ENCODE measurements at regions of chr5 and their contacts with region 1.

Region 1: DNA sequence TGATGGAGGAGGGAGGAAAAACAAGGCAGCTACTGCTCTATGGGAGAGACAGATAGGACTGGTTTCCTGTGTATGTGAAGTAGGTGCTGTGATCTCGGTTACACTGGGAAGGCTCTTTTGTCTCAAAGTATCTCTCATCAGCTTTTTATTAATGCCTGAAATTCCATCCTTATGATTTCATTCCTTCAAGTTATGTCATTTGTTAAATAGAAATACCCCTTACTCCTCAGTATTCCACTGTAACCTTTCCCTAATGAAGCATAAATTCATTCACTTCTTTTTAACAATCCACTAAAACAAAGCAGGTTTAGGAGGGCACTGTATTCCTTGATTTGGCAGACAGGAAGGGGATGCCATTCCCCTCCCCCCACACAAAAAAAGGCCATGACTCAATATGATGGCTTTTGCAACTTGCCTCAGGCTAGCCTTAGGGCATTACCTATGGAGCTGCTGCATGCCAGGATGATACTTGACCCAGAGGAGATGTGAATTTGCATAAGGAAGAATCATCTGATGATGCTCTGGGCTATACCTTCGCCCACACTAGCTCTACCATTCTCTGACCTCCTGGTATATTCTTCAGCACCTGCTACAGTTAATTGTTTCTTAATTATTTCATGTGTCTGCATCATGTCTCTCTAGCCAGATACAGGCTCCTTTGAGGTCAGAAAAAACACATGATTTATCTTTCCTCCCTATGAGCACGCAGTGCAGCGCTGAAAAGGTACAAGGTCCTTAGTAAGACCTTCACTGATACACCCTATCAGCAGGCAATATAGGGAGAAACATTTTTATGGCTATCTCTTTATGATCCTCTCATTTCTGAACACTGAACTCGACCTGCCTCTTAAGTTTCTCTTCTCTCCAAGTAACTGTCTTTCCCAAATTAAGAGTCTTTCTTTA is 26.3 kb downstream of the NR3C1 start:
- DNase-seq: peak in 1 of 14 experiments; percentile 18
- ATAC-seq: no peak
- H3K4me3 ChIP-seq: no peak overlapping the region
- H3K4me3 Mint-ChIP-seq: peak overlapping the region; percentile 5
- H3K27ac ChIP-seq: no peak overlapping the region
- H3K27ac Mint-ChIP-seq: peak overlapping the region; percentile 43
- H3K4me1 ChIP-seq: peaks cover 9% of the 10 kb centered on the region
- H3K4me1 Mint-ChIP-seq: peaks cover 93% of the 10 kb centered on the region
- H3K27me3 ChIP-seq: no peaks in the 10 kb centered on the region
- H3K27me3 Mint-ChIP-seq: no peaks in the 10 kb centered on the region
- CTCF ChIP-seq: no peak

Region 2: GRCh38 chr5:143338658-143339366 is 38.4 kb before region 1 on chr5:
- CTCF ChIA-PET with region 1: no interaction called
- POLR2A ChIA-PET with region 1: no interaction called
- intact Hi-C with region 1: loop called in 1 of 2 experiments (anchors 5 kb)
- DNase-seq: peak in 1 of 14 experiments; percentile 18
- ATAC-seq: peak; percentile 51
- H3K4me3 ChIP-seq: no peak overlapping the region
- H3K4me3 Mint-ChIP-seq: no peak overlapping the region
- H3K27ac ChIP-seq: no peak overlapping the region
- H3K27ac Mint-ChIP-seq: no peak overlapping the region
- H3K4me1 ChIP-seq: no peaks in the 10 kb centered on the region
- H3K4me1 Mint-ChIP-seq: peaks cover 62% of the 10 kb centered on the region
- H3K27me3 ChIP-seq: no peaks in the 10 kb centered on the region
- H3K27me3 Mint-ChIP-seq: no peaks in the 10 kb centered on the region
- CTCF ChIP-seq: no peak

Region 3: GRCh38 chr5:143395638-143396352 is 18.6 kb after region 1 on chr5:
- CTCF ChIA-PET with region 1: no interaction called
- POLR2A ChIA-PET with region 1: no interaction called
- intact Hi-C with region 1: loop called in 1 of 2 experiments (anchors 2 kb)
- DNase-seq: no peak
- ATAC-seq: no peak
- H3K4me3 ChIP-seq: peak overlapping the region; percentile 11
- H3K4me3 Mint-ChIP-seq: peak overlapping the region; percentile 96
- H3K27ac ChIP-seq: no peak overlapping the region
- H3K27ac Mint-ChIP-seq: no peak overlapping the region
- H3K4me1 ChIP-seq: peaks cover 17% of the 10 kb centered on the region
- H3K4me1 Mint-ChIP-seq: peaks cover 84% of the 10 kb centered on the region
- H3K27me3 ChIP-seq: no peaks in the 10 kb centered on the region
- H3K27me3 Mint-ChIP-seq: no peaks in the 10 kb centered on the region
- CTCF ChIP-seq: no peak

Measured in CD4-positive, alpha-beta T cell (primary cell).